HCT116 (cell line): ENCODE measurements at regions of chr11 and their contacts with region 1.

Region 1: DNA sequence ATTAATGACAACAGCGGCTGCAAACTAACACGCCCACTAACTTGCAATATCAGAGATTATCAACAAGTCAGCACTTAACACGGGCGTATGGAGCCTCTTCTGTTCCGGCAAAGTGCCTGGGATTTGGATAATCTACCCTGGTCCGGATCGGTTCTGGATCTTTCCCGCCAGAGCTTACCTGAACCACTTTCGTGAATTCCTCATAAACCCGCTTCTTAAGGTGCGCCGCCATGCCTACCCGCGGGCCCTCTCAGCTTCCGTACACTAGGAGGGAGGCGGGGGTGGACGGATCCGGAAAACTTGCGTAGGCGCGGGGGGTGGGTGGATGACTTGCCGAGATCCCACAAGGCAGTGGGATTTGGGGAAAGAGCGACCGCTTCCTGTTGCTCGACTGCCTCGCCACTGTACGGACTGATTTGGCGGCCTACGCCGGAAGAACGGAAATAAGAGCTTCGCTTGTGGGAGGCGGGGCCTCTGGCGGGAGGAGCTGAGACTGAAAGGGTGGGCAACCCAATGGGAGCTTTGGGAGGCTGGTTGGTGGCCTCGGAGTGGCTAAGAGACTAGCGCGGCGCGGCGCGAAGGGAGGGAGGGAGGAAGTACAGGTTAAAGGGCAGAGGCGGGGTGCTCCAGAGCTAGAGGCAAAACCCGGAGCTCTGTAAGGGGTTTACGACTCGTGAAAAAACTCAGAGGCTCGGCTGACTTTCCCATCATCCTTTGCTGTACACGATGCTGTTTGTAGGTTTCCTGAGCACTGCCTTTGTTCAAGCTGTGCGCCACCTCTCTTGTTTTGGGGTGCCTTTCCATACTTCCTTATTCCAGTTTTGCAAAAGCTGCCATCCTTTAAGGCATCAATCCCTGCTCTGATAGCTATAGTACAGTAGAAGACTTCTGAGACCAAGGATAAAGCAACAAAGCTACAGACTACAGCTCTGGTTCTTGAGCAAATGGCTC is at the start of gene INTS4:
- DNase-seq: peak; percentile 100
- ATAC-seq: peak; percentile 98
- H3K4me3 ChIP-seq: peak within 1 kb of the TSS; percentile 80 to 96
- H3K27ac ChIP-seq: peak within 1 kb of the TSS; percentile 66
- H3K4me1 ChIP-seq: peaks cover 18% of the 10 kb centered on the region in 2 experiments
- H3K27me3 ChIP-seq: no peaks in the 10 kb centered on the region
- CTCF ChIP-seq: no peak
- POLR2A ChIP-seq: peak; percentile 90
- RAD21 ChIP-seq: peak; percentile 17; the same call in 1 of the 2 replicates
- total RNA-seq, gene INTS4: 41.0 TPM

Region 2: GRCh38 chr11:77710358-77710757 is 284.3 kb before region 1 on chr11:
- CTCF ChIA-PET with region 1: no interaction called
- POLR2A ChIA-PET with region 1: no interaction called
- RAD21 ChIA-PET with region 1: no interaction called
- intact Hi-C with region 1: no loop called
- DNase-seq: no peak
- ATAC-seq: no peak
- H3K4me3 ChIP-seq: no peak overlapping the region
- H3K27ac ChIP-seq: no peak overlapping the region
- H3K4me1 ChIP-seq: peaks cover 8 to 21% of the 10 kb centered on the region in 2 experiments
- H3K27me3 ChIP-seq: no peaks in the 10 kb centered on the region
- CTCF ChIP-seq: no peak
- POLR2A ChIP-seq: no peak
- RAD21 ChIP-seq: no peak

Region 3: DNA sequence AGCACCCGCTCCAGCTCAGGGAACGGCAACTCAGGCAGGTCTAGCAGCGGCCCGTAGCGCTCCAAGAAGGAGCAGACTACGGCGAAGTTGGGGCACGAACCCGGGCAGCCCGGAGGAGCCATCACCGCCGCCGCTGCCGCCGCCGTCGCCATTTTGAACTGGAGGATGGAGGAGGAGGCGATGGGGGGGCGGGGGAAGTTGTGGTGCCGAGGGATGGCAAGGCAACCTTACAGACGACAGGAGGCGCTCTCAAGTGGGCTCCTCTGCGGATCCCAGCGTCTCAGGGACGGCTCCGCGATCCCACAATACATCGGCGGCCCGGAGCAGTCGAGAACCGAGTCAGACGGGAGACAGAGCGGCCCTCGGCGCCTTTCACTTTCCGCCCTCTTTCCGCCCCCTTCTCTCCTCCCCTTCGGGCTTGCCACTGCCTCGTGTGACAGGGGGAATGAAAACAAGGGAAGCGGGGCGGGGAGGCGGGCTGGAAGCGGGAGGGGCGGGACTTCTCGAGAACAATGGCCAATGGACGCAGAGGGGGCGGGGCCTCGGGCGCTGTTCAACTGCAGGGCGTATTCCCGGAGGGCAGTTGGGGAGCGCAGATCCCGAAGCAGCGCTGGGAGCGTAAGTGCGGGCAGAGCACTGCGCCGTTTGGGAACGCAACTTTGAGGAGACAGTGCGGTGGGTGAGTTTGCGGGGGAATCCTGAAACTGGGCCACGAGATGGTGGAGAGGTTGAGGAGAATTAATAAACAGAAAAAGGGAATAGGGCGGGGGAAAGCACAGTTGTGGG is 173.9 kb before region 1 on chr11 and contains the starts of genes AAMDC and RSF1:
- CTCF ChIA-PET with region 1: no interaction called
- POLR2A ChIA-PET with region 1: interaction called, 3 read pairs
- RAD21 ChIA-PET with region 1: no interaction called
- intact Hi-C with region 1: loop called (anchors 1 kb)
- DNase-seq: peak; percentile 96
- ATAC-seq: peak; percentile 85
- H3K4me3 ChIP-seq: peak within 1 kb of the TSS; percentile 78 to 91
- H3K27ac ChIP-seq: peak within 1 kb of the TSS; percentile 90
- H3K4me1 ChIP-seq: peaks cover 5 to 13% of the 10 kb centered on the region in 2 experiments; a peak in 3 of 4 replicates
- H3K27me3 ChIP-seq: no peaks in the 10 kb centered on the region
- CTCF ChIP-seq: peak; percentile 47 to 75 (median 61); a peak in 5 of 6 replicates
- POLR2A ChIP-seq: peak; percentile 74
- RAD21 ChIP-seq: peak; percentile 59
- total RNA-seq, gene AAMDC: 11.2 TPM
- total RNA-seq, gene RSF1: 43.1 TPM

Region 4: DNA sequence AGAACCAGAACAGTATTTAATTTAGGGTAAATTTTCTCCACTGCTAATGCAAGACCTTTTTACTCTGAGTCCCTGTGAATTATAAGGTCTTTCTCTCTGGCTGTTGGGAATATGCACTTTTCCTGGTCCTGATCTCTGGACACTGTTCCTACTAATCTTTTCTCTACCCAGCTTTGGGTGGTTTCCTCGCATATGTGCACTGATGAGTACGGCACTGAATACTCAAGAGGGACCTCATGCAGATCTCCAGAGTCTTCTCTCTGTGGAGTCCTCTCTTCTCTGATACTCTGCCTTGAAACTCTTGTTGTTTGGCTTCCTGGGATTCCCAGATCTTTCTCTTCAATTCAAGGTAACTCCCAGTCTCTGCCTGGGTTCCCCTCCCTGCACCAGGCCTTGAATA is 14.4 kb after region 1 on chr11:
- CTCF ChIA-PET with region 1: interaction called, 9 read pairs
- POLR2A ChIA-PET with region 1: interaction called, 11 read pairs
- RAD21 ChIA-PET with region 1: no interaction called
- intact Hi-C with region 1: no loop called
- DNase-seq: no peak
- ATAC-seq: no peak
- H3K4me3 ChIP-seq: no peak overlapping the region
- H3K27ac ChIP-seq: no peak overlapping the region
- H3K4me1 ChIP-seq: no peaks in the 10 kb centered on the region
- H3K27me3 ChIP-seq: no peaks in the 10 kb centered on the region
- CTCF ChIP-seq: no peak
- POLR2A ChIP-seq: no peak
- RAD21 ChIP-seq: no peak

Region 5: GRCh38 chr11:78019821-78020220 is 25.1 kb after region 1 on chr11:
- CTCF ChIA-PET with region 1: interaction called, 12 read pairs
- POLR2A ChIA-PET with region 1: interaction called, 14 read pairs
- RAD21 ChIA-PET with region 1: no interaction called
- intact Hi-C with region 1: no loop called
- DNase-seq: no peak
- ATAC-seq: no peak; the same call in 1 of the 2 replicates
- H3K4me3 ChIP-seq: no peak overlapping the region
- H3K27ac ChIP-seq: no peak overlapping the region
- H3K4me1 ChIP-seq: peaks cover 19 to 45% of the 10 kb centered on the region in 2 experiments; a peak in 3 of 4 replicates
- H3K27me3 ChIP-seq: no peaks in the 10 kb centered on the region
- CTCF ChIP-seq: no peak
- POLR2A ChIP-seq: no peak
- RAD21 ChIP-seq: no peak

Region 6: DNA sequence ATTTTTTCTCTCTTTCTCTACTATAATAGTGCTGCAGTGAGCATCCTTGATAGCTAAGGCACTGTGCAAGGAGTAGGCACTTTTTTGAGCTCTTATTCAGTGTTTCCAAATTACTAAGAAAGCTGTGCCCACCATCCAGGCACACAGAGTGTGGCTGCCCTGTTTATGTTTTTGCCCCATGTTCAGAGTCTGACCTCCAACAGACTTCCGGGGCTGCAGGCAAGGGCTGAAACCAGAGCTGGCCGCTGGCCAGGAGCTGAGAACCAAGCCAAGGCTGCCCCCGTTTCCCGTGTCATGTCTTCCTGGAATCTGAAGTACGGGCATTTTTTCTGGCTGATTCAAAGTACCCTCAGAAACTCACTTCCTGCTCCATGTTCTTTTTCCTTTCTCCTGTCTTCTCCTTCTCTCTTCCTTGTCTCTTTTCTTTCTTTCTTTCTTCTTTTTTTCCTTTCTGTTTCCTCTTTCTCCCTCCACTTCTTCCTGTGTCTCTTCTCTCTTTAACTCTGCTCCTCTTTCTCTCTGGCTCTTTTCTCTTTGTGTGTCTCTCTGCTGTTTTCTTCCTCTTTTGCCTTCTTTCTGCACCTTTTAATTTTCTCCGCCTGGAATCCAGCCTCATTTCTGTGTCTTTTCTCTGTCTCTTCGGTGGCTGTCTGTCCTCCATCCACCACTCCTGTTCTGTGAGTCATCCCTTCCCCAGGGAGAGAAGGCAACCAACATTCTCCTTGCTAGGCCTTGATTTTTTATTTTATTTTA is 45.4 kb after region 1 on chr11:
- CTCF ChIA-PET with region 1: interaction called, 4 read pairs
- POLR2A ChIA-PET with region 1: interaction called, 13 read pairs
- RAD21 ChIA-PET with region 1: no interaction called
- intact Hi-C with region 1: no loop called
- DNase-seq: no peak
- ATAC-seq: peak; percentile 57
- H3K4me3 ChIP-seq: peak overlapping the region; percentile 28 to 48
- H3K27ac ChIP-seq: peak overlapping the region; percentile 85
- H3K4me1 ChIP-seq: peaks cover 33 to 48% of the 10 kb centered on the region in 2 experiments
- H3K27me3 ChIP-seq: no peaks in the 10 kb centered on the region
- CTCF ChIP-seq: no peak
- POLR2A ChIP-seq: no peak
- RAD21 ChIP-seq: no peak